H1 (cell line): ENCODE measurements at regions of chr14 and their contacts with region 1.

Region 1: GRCh38 chr14:24310646-24311604 is at the start of gene LTB4R:
- DNase-seq: no peak
- H3K4me3 ChIP-seq: no peak within 1 kb of the TSS
- H3K27ac ChIP-seq: no peak within 1 kb of the TSS
- H3K4me1 ChIP-seq: no peaks in the 10 kb centered on the region; a peak in 2 of 7 replicates
- H3K27me3 ChIP-seq: peaks cover 0 to 4% (median 0%) of the 10 kb centered on the region in 4 experiments; a peak in 3 of 7 replicates
- CTCF ChIP-seq: no peak
- EP300 ChIP-seq: no peak
- POLR2A ChIP-seq: no peak
- RAD21 ChIP-seq: no peak
- total RNA-seq, gene LTB4R: 4.1 and 6.8 TPM in 2 replicates

Region 2: DNA sequence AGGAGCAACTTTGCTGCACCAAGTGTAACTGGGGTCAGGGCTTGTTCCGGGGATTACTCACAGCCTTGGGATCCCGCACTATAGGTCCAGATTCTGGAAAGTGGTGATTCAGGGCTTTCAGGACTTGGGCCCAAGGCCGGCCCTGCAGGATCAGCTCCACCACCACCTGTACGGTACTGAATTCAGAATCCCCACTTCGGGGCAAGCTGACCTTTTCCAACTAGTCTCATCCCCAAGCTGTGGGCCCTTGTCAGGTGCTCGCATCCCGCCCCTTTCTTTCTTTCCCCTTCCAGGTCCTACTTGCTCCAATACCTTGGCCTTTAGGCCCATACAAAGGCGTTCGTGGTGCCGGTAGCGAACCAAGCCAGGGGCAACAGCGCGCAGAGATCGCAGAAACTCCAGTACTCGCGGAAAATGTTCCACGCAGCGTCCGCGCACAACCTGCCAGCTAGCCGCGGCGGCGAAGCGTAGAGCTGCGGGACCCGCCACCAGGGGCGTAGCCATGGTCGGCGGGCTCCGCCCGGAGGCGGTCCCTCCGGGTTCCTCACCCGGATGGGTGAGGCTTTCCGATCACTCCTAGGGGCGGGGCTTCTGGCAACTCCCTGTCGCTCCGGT is 69.0 kb before region 1 on chr14:
- CTCF ChIA-PET with region 1: interaction called, 44 read pairs
- POLR2A ChIA-PET with region 1: interaction called, 16 read pairs
- DNase-seq: peak; percentile 59 to 94
- H3K4me3 ChIP-seq: peak overlapping the region; percentile 80 to 97 (median 92)
- H3K27ac ChIP-seq: peak overlapping the region; percentile 84
- H3K4me1 ChIP-seq: peaks cover 0 to 5% (median 2%) of the 10 kb centered on the region in 4 experiments; a peak in 4 of 7 replicates
- H3K27me3 ChIP-seq: no peaks in the 10 kb centered on the region
- CTCF ChIP-seq: peak; percentile 34 to 54 (median 35); a peak in 3 of 4 replicates
- EP300 ChIP-seq: no peak
- POLR2A ChIP-seq: no peak
- RAD21 ChIP-seq: no peak

Region 3: DNA sequence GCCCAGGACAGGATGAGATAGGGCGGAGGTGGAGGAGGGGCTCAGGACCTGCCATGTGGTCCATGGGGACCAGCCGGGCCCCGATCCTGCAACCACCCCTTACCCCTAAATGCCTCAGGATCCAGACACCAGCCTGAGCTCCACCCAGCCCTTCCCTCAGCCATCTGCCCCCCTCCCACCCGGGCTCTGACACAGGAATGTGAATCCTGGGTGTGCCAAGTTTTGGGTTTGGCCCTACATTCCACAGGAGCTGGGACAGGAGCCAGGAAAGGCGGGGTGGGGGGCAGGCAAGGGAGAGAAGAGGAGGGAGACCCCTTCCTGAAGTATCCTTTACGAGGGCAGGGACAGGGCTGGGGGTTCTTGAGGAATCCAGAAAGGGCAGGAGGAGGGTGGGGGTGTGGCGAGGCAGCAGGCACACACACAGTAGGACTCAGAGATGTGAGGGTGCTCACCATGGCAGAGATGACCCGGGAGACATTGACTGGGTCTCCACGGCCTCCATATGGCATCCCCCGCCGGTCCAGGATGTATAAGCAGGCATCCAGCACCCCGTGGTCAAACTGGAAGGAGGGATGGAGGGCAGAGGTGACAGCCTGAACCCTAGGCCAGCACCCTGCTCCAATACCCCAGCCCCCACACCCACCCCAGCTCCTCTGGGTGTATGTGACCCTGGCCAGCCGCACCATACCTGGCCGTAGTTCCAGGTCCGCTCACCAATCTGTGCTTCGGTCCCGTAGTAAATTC is 51.5 kb before region 1 on chr14:
- CTCF ChIA-PET with region 1: interaction called, 27 read pairs
- POLR2A ChIA-PET with region 1: interaction called, 4 read pairs
- DNase-seq: no peak
- H3K4me3 ChIP-seq: no peak overlapping the region
- H3K27ac ChIP-seq: no peak overlapping the region
- H3K4me1 ChIP-seq: peaks cover 0 to 2% (median 0%) of the 10 kb centered on the region in 4 experiments; a peak in 1 of 7 replicates
- H3K27me3 ChIP-seq: no peaks in the 10 kb centered on the region; a peak in 1 of 7 replicates
- CTCF ChIP-seq: no peak
- EP300 ChIP-seq: no peak
- POLR2A ChIP-seq: no peak
- RAD21 ChIP-seq: no peak

Region 4: DNA sequence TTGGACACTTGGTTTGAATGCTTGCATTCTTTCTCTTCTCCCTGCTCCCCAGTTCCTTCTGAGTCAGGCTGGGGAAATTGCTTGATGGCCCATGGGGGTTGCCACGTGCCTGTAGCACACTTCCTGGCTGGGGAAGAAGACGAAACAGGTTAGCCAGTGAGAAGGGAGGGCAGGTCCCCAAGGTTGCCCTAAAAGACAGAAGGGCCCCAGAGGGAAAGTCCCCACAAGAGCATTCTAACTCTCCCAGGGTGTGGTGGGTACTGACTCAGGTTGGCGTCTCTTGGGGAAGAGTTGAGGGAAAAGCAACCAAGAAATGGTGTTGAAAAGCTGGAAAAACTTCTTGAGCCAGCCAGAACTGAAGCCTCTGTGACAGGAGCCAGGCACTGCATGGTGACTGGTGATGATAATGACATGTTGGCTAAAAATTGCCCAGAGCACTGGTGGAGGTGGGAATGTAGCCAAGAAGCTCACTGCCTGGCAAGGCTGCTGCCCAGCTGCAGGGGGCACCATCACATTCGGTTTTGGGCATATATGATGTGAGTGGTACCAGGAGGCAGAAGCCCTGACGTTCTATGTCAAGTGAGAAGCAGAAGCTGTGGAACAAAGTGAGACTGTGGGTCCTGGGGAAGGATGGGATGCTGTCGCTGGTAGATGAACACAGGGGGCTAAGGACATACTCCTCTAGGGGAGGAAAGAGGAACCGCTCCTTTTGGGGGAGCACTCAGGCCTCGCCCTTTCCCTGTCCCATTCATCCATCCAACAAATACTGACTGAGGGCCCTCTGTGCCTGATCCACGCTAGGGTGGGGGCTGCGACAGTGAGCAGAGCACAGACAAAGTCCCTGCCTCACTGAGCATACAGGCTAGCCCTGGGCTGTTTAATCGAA is 31.4 kb before region 1 on chr14:
- CTCF ChIA-PET with region 1: interaction called, 44 read pairs
- POLR2A ChIA-PET with region 1: interaction called, 4 read pairs
- DNase-seq: no peak
- H3K4me3 ChIP-seq: no peak overlapping the region
- H3K27ac ChIP-seq: no peak overlapping the region
- H3K4me1 ChIP-seq: no peaks in the 10 kb centered on the region
- H3K27me3 ChIP-seq: no peaks in the 10 kb centered on the region
- CTCF ChIP-seq: peak; percentile 27 to 52 (median 51); a peak in 2 of 4 replicates
- EP300 ChIP-seq: no peak
- POLR2A ChIP-seq: no peak
- RAD21 ChIP-seq: peak; percentile 10 to 28; a peak in 2 of 4 replicates

Region 5: DNA sequence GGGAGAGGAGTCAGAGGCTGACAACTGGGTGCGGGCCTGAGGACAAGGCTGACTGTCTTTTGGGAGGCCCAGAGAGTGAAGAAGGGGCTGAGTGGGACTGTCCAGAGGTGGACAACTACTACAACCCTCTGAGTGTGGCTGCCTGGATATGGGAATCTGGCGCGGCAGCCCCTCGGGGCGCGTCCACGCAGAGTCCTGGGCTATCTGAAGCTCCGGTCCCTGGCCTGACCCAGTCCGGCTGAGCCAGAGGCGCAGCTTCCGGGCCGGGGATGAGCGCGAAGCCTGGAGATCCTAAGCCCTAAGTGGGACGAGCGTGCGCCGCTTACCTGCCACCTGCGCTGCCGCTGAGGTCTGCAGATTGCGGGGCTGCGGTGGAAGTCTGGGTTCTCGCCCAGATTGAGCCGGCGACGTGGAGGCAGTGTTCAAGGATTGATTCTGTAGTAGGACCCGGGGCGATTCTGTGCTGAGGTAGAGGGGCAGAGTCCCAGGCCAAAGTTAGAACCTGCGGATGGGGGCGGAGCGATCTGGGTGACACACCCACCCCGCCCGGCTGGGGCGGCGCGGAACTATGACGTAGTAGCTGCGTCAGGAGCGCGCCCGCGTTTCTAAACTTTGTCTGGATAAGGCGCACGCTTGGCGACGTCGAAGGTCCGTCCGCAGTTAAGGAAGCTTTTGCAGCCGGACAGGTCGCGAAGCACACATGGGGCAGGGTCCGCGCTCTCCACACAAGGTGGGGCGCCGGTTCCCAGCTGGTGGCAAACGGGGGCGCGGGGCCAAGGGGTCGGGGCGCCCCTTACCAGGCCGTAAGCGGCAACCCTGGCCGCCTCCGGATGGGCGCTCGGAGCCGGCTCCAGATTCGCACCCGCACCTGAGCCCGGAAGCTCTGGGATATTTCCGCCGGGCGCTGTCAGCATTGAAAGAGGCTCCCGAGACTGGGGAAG is 11.4 kb before region 1 on chr14 and contains the starts of genes DHRS1 and NOP9:
- CTCF ChIA-PET with region 1: interaction called, 80 read pairs
- POLR2A ChIA-PET with region 1: interaction called, 35 read pairs
- DNase-seq: peak; percentile 61 to 99
- H3K4me3 ChIP-seq: peak within 1 kb of the TSS; percentile 76 to 91 (median 88)
- H3K27ac ChIP-seq: no peak within 1 kb of the TSS
- H3K4me1 ChIP-seq: peaks cover 0 to 7% (median 4%) of the 10 kb centered on the region in 4 experiments; a peak in 5 of 7 replicates
- H3K27me3 ChIP-seq: no peaks in the 10 kb centered on the region
- CTCF ChIP-seq: no peak
- EP300 ChIP-seq: peak in 1 of 2 experiments; percentile 10; a peak in 1 of 3 replicates
- POLR2A ChIP-seq: peak; percentile 81 to 88
- RAD21 ChIP-seq: no peak
- total RNA-seq, gene DHRS1: 8.8 and 13.4 TPM in 2 replicates
- total RNA-seq, gene NOP9: 34.8 and 39.3 TPM in 2 replicates

Region 6: GRCh38 chr14:24332268-24332993 is 21.5 kb after region 1 on chr14:
- CTCF ChIA-PET with region 1: interaction called, 173 read pairs
- POLR2A ChIA-PET with region 1: interaction called, 5 read pairs
- DNase-seq: peak; percentile 34 to 89
- H3K4me3 ChIP-seq: peak overlapping the region; percentile 32 to 62 (median 52)
- H3K27ac ChIP-seq: no peak overlapping the region
- H3K4me1 ChIP-seq: peaks cover 0 to 16% (median 9%) of the 10 kb centered on the region in 4 experiments; a peak in 5 of 7 replicates
- H3K27me3 ChIP-seq: peaks cover 39 to 85% (median 59%) of the 10 kb centered on the region in 4 experiments
- CTCF ChIP-seq: peak in 2 of 3 experiments; percentile 56 to 79; a peak in 3 of 4 replicates
- EP300 ChIP-seq: no peak
- POLR2A ChIP-seq: no peak
- RAD21 ChIP-seq: peak; percentile 50 to 54

Region 7: DNA sequence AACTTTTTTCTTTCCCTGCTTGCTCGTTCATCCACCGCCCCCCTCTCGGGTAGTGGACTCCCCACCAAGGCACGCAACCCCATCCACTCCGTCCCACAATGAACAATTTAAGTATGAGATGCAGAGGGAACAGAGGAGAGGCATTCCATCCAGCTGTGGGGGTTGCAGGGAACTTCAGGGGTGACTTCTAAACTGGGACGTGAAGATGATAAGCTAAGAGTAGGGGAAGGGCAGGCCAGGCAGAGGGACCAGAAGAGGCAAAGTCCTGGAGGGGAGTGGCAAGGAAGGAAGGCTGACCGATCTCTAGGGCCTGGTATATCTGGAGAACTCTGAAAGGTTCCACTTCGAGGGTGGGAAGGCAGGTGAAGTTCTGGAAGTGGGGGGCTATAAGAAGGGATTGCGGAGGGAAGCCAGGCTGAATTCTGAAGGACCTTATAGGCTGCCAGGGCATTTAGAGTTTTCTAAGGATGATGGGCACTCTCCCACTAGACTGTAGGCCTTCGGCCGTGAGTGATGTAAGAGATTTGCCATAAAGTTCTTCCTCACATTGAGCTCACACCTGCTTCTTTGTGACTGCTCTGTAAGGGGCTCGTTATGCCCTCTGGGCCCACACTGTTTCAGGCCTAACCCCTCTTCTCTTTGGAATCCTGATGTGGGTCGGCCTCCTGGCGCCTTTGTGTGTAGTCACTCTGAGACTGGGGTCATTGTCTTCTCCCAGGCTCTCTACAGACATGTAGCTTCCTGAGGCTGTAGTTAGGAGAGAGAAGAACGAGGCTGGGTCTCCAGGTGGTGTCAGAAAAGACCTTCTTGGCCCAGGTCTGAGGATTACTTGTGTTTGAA is 69.2 kb after region 1 on chr14:
- CTCF ChIA-PET with region 1: no interaction called
- POLR2A ChIA-PET with region 1: no interaction called
- DNase-seq: no peak
- H3K4me3 ChIP-seq: no peak overlapping the region
- H3K27ac ChIP-seq: no peak overlapping the region
- H3K4me1 ChIP-seq: peaks cover 11 to 25% (median 13%) of the 10 kb centered on the region in 4 experiments
- H3K27me3 ChIP-seq: no peaks in the 10 kb centered on the region
- CTCF ChIP-seq: no peak
- EP300 ChIP-seq: no peak
- POLR2A ChIP-seq: no peak
- RAD21 ChIP-seq: no peak

Region 8: DNA sequence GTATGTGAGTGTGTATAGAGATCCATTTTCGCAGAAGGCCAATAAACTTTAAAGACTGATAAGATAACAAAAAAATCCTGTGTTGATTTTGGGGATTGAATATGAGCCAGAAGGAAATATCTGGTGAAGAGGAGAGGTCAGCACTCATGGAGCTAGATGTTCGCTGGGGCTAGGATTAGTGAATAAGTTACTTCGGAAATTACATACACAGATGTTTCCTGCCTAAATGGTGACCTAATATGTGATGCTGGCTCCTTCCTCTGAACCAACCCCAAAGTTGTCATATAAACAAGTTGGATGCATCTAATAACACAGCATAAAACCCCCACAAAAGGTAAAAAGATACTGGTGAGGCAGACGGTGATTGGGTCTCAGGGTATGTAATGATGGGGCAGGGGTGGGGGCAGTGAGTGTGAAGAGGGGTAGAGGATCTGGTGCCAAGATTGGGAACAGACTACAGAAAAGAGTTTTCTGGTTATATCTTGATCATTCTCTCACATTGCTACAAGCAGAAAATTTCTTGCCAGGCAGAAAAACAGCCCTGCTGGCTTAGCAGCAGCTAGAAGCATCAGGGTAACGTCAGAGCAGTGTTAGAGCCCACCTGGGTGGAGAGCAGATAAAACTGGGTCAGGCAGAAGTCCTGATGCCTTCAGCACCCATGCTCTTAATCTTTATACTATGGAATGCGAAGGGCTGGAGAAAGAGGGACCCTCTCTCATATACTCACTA is 463.4 kb after region 1 on chr14:
- CTCF ChIA-PET with region 1: no interaction called
- POLR2A ChIA-PET with region 1: no interaction called
- DNase-seq: no peak
- H3K4me3 ChIP-seq: no peak overlapping the region
- H3K27ac ChIP-seq: no peak overlapping the region
- H3K4me1 ChIP-seq: peaks cover 0 to 2% (median 0%) of the 10 kb centered on the region in 4 experiments; a peak in 1 of 7 replicates
- H3K27me3 ChIP-seq: no peaks in the 10 kb centered on the region
- CTCF ChIP-seq: no peak
- EP300 ChIP-seq: no peak
- POLR2A ChIP-seq: no peak
- RAD21 ChIP-seq: no peak